PC-3 (cell line): ENCODE measurements at regions of chr2 and their contacts with region 1.

Region 1: DNA sequence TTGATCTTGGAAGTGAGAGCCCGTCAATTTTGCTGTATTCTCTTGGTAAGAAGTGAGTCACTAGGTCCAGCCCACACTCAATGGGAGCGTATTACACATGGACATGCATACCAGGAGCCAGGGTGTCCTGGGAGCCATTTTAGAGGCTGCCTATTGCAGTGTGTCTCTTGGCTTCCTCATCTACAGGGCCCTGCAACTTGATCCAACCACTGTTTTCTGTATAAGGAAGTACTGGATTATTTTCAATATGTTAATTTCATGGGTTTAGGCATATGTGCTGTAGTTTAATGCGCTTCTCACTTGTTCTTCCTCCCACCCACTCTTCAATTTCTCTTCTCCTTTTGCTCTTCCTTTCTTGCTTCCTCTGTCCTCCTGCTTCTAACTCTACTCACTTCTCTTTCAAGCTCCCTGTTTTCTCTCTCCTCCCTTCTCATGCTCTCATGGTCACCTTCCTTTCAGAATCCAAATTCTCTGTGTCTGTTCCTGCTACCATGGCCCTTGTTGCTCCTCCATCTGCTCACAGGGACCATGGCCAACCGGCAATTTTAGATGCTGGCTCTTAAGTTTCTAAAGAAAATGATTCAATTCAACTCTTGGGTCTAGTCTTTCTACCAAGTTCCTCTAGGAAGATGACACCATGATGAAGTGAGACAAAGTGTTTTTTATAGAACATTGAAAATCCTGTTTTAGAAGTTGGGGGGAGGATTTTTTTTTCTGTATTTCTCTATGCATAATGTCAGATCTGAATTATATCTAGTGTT is 152.0 kb upstream of the ZEB2 start:
- DNase-seq: no peak
- ATAC-seq: no peak
- H3K4me3 ChIP-seq: no peak overlapping the region
- H3K27ac ChIP-seq: no peak overlapping the region
- H3K4me1 ChIP-seq: peaks cover 16% of the 10 kb centered on the region
- H3K27me3 ChIP-seq: no peaks in the 10 kb centered on the region
- CTCF ChIP-seq: no peak

Region 2: GRCh38 chr2:144780983-144781382 is 109.1 kb after region 1 on chr2:
- CTCF ChIA-PET with region 1: interaction called, 12 read pairs
- POLR2A ChIA-PET with region 1: no interaction called
- intact Hi-C with region 1: no loop called
- DNase-seq: no peak
- ATAC-seq: no peak
- H3K4me3 ChIP-seq: no peak overlapping the region
- H3K27ac ChIP-seq: no peak overlapping the region
- H3K4me1 ChIP-seq: no peaks in the 10 kb centered on the region
- H3K27me3 ChIP-seq: no peaks in the 10 kb centered on the region
- CTCF ChIP-seq: no peak

Region 3: GRCh38 chr2:144959416-144959815 is 287.5 kb after region 1 on chr2:
- CTCF ChIA-PET with region 1: no interaction called
- POLR2A ChIA-PET with region 1: no interaction called
- intact Hi-C with region 1: no loop called
- DNase-seq: peak; percentile 62
- ATAC-seq: peak; percentile 93
- H3K4me3 ChIP-seq: no peak overlapping the region
- H3K27ac ChIP-seq: peak overlapping the region; percentile 50
- H3K4me1 ChIP-seq: peaks cover 10% of the 10 kb centered on the region
- H3K27me3 ChIP-seq: no peaks in the 10 kb centered on the region
- CTCF ChIP-seq: no peak